Posterior vena cava (tissue), 2 donors: ENCODE measurements at regions of chr11 and their contacts with region 1.

Region 1: DNA sequence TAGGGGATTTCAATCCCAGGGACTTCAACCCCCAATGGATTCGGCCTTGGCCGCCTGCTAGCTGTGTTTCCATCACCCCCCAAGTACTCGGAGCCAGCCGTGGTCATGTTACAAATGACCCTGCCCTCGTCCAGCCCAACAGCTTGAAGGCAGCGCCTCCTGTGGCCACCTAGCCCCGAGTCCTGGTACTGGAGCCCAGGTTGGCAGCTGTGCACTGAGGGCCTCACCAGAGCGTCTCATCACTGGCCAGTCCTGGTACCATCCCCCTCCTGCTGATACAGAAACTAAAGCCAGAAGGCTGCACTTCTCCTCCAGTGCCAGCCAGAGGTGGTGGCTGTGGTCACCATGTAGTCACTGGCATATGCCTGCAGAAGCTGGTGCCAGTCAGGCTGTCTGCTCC is 44.9 kb upstream of the FADD start:
- DNase-seq: no peak

Region 2: DNA sequence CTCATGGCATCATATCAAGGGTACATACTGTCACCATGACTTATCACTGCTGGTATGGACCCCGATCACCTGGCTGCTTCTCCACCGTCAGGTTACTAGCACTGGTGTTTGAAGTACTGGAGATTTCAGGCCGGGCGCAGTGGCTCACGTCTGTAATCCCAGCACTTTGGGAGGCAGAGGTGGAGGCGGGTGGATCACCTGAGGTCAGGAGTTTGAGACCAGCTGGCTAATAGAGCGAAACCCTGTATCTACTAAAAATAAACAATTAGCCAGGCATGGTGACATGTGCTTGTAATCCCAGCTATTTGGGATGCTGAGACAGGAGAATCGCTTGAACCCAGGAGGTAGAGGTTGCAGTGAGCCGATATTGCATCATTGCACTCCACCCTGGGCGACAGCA is 162.5 kb before region 1 on chr11:
- intact Hi-C with region 1: loop called in 1 of 2 experiments (anchors 2 kb)
- DNase-seq: peak; percentile 43